ENCODE measurements at regions of chr10 and their contacts with region 1.

Region 1: GRCh38 chr10:12720217-12720981 is 281.1 kb downstream of the CCDC3 start:
- DNase-seq: peak; percentile 84
- H3K4me3 ChIP-seq: no peak overlapping the region
- H3K27ac ChIP-seq: peak overlapping the region in 1 of 4 donors; percentile 43
- H3K4me1 ChIP-seq: peaks cover 0 to 10% (median 4%) of the 10 kb centered on the region in 4 donors
- H3K27me3 ChIP-seq: no peaks in the 10 kb centered on the region
- CTCF ChIP-seq: no peak
- EP300 ChIP-seq: no peak
- POLR2A ChIP-seq: no peak

Region 2: GRCh38 chr10:12158111-12158510 is 562.3 kb before region 1 on chr10:
- intact Hi-C with region 1: no loop called
- DNase-seq: no peak
- H3K4me3 ChIP-seq: no peak overlapping the region
- H3K27ac ChIP-seq: no peak overlapping the region
- H3K4me1 ChIP-seq: no peaks in the 10 kb centered on the region
- H3K27me3 ChIP-seq: no peaks in the 10 kb centered on the region
- CTCF ChIP-seq: no peak
- EP300 ChIP-seq: no peak
- POLR2A ChIP-seq: no peak

Region 3: DNA sequence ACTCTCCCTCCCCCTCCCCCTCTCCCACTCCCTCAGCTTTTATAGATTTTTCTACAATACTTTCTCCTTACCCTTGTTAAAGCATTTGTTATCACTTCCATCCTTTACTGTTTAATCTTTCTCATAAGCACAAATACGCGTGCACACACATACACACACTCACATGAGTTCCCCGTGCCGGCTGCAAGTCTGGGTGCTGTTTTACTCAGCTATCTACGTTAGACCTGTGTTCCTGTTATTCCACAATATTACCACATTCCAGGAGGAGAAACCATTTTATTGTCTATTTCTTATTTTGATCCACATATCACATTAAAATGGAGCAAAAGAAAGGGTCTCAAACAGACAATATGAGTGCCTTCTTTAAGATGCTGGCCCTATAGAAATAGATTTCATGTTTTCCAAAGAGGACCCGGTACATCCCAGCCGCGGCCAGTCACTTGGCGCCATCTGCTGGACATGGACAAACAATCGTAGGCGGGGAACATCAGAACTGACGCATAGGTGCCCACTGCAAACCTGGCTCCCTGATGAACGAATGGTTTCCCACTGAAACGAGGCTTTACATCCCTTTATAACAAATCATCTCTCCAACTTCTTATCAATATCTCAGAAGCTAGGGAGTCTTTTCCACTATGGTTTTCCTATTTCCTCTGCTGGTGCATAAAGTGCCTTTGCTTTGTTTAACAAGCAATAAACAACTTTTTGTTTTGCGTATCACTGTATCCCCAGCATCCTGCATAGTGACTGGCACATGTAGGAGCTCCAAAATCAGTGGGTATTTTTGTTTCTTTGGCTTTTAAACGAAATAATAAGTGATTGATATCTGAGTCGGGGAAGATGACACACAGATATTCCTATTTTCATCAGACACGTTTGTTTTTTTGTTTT is 354.4 kb after region 1 on chr10:
- intact Hi-C with region 1: loop called (anchors 10 kb)
- DNase-seq: peak; percentile 76
- H3K4me3 ChIP-seq: no peak overlapping the region
- H3K27ac ChIP-seq: no peak overlapping the region
- H3K4me1 ChIP-seq: no peaks in the 10 kb centered on the region
- H3K27me3 ChIP-seq: no peaks in the 10 kb centered on the region
- CTCF ChIP-seq: peak in 3 of 4 experiments; percentile 55 to 75 (median 63)
- EP300 ChIP-seq: no peak
- POLR2A ChIP-seq: no peak

Measured in sigmoid colon (tissue), 7 donors.